ENCODE measurements at regions of chr16 and their contacts with region 1.

Region 1: DNA sequence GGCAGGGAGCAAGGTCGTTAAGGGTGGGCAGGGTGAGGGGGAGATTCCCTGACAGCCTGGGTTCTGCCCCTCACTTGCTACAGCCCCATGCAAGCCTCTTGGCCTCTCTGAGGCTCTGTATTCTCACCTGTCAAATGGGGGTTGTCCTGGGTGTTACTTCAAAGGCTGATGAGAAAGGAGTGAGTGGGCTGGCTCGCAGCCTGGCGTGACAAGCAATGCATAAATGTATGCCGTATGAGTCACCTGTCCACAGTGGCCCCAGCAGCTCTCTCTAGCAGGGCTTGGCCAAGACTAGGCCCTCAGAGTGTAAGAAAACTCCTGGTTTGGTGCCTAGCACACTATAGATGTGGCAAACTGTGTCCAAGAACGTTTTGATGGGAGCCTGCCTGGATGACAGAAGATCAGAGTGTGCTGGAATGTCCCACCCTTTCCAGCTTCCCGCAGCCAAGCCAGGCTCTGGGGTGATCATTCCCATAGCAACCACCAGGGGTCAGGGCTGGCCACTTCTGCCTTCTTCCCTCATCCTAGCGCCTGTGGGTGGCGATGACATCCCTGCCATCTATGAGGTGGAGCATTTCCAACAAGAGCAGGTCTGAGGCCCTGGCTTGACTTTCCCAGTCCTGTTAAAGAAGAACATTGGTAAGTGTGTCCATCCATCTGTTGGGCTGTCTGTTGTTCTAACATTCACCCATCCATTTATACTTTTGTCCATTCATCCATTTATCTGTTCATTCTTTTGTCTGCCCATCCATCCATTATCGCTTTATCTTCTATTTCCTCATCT is 37.2 kb upstream of the ADGRG1 start:
- DNase-seq: peak; percentile 58
- H3K4me3 Mint-ChIP-seq: peak overlapping the region; percentile 32
- H3K27ac Mint-ChIP-seq: peak overlapping the region; percentile 90
- H3K4me1 Mint-ChIP-seq: peaks cover 42% of the 10 kb centered on the region
- H3K27me3 Mint-ChIP-seq: no peaks in the 10 kb centered on the region

Region 2: DNA sequence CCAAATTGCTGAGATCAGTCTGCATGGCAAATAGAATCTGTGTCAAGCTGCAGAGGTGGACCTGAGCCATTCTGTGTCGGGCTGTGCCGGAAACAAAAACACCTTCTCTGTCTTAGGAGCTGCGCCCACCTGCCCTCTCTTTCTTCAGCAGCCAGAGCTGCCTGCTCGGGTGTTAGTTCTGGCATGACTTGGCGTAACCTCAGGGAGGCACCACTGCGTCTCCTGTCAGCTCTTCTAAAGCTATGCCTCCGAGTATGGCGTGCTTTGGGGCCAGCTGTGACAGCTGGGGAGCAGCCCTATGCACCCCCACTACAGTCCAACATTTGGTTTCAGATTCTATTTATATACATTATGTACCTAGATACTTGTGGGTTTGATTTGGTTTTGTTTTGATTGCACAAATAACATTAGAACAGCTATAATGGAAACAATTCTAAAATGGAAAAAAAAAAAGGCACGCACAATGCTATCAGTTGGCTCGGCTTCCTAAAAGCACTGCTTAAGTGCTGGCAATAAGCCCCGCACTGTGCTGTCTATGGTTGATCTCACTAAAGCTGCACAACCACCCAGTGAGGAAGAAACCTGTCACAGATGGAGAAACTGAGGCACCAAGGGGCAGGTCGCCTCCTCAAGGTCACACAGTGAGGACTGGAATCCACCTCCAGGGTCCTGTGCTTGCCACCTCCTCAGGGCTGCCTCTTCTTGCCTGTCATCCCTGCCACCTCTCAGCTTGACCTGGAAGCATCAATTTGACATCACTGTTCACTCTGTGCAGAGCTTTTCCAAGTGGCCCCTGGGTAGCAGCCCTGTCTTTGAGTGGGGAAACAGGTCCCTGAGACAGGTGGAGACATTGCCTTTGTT is 18.5 kb after region 1 on chr16:
- intact Hi-C with region 1: loop called (anchors 1 kb)
- DNase-seq: peak; percentile 74
- H3K4me3 Mint-ChIP-seq: peak overlapping the region; percentile 58
- H3K27ac Mint-ChIP-seq: peak overlapping the region; percentile 87
- H3K4me1 Mint-ChIP-seq: peaks cover 60% of the 10 kb centered on the region
- H3K27me3 Mint-ChIP-seq: no peaks in the 10 kb centered on the region

Region 3: GRCh38 chr16:57628008-57628781 is 36.9 kb after region 1 on chr16 and contains the start of gene ADGRG1:
- intact Hi-C with region 1: loop called (anchors 5 kb)
- DNase-seq: peak; percentile 24
- H3K4me3 Mint-ChIP-seq: peak within 1 kb of the TSS; percentile 62
- H3K27ac Mint-ChIP-seq: peak within 1 kb of the TSS; percentile 68
- H3K4me1 Mint-ChIP-seq: peaks cover 12% of the 10 kb centered on the region
- H3K27me3 Mint-ChIP-seq: peaks cover 30% of the 10 kb centered on the region
- total RNA-seq, gene ADGRG1: 1.8 and 1.9 TPM in 2 replicates

Region 4: DNA sequence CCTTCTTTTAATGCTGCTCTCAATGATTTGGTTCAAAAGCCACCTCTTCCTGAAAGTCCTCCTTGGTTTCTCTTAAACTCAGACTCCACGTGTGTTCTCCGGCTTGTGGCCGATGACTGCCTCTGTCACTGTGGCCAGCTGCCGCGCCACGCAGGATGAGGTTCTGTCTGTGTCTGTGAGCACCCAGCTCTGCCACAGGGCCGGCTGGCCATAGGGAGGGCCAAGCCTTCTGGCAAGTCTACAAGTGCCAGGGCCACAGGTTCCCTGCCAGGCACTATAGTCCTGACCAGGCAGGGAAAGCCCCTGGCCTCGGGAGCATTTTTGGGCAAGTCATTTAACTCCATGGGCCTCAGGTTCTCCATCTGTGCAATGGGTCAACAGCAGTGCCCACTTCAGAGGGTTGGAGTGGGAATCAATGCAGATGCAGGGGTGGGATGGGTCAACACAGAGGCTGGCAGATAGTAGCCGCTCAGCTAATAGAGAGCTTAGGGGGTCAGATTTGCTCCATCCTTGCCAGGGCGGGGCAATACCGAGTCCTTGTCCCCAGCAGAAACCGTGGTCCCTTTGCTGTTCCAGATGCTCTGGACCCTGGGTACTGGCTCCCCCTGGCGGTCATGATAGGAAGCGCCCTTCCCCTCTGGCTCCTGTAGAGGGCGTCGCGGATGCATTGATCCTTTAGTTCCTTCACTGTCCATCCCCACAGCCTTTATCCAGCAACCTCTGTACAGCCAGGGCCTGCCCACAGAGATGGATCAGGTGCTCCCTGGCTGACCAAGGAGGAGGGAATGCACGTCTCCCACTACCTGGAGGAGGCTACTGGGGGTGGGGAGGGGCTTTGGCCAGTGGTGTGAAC is 57.5 kb after region 1 on chr16:
- intact Hi-C with region 1: loop called (anchors 1 kb)
- DNase-seq: peak; percentile 80
- H3K4me3 Mint-ChIP-seq: no peak overlapping the region
- H3K27ac Mint-ChIP-seq: peak overlapping the region; percentile 48
- H3K4me1 Mint-ChIP-seq: peaks cover 23% of the 10 kb centered on the region
- H3K27me3 Mint-ChIP-seq: peaks cover 2% of the 10 kb centered on the region

Region 5: GRCh38 chr16:57734925-57735754 is 143.9 kb after region 1 on chr16:
- intact Hi-C with region 1: loop called (anchors 1 kb)
- DNase-seq: peak; percentile 98
- H3K4me3 Mint-ChIP-seq: peak overlapping the region; percentile 97
- H3K27ac Mint-ChIP-seq: peak overlapping the region; percentile 96
- H3K4me1 Mint-ChIP-seq: peaks cover 15% of the 10 kb centered on the region
- H3K27me3 Mint-ChIP-seq: no peaks in the 10 kb centered on the region

Region 6: DNA sequence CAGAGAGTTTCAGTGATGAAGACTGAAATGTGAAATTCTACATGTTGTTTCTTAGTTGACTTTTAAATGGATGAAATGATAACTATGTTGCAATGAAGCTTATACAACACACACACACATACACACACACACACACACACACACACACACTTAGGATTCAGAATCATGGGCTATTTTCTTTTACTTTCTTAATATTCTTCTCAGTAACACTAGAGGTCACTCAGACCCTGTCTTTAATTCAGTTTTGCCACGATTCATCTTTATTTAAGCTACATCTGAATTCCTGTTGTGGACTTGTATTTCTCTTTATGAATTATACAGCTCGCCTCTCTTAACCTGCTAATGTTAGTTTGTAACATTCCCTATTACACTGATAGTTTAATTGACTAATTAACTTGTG is 1252.4 kb after region 1 on chr16:
- intact Hi-C with region 1: no loop called
- DNase-seq: no peak
- H3K4me3 Mint-ChIP-seq: no peak overlapping the region
- H3K27ac Mint-ChIP-seq: no peak overlapping the region
- H3K4me1 Mint-ChIP-seq: no peaks in the 10 kb centered on the region
- H3K27me3 Mint-ChIP-seq: no peaks in the 10 kb centered on the region

Measured in activated T-helper 2 cell treated with anti-CD3 and anti-CD28 coated beads, Interferon-gamma antibody, Interleukin-2, Interleukin-4, amounts not matched to agents 10 μg/mL and 5 μg/mL and 100 μg/mL, durations not matched to agents 14 hours and 24 hours and 36 hours (primary cell).